Activated T-helper 1 cell treated with anti-CD3 and anti-CD28 coated beads, Interleukin-12 subunit alpha, Interleukin-12 subunit beta, Interleukin-2, Interleukin-4 antibody, amounts not matched to agents 30 ng/mL and 10 ng/mL and 1 ng/mL, durations not matched to agents 14 hours and 24 hours and 36 hours (primary cell): ENCODE measurements at regions of chr11 and their contacts with region 1.

Region 1: GRCh38 chr11:39374963-39375698 is 2084.3 kb downstream of the LRRC4C start:
- DNase-seq: no peak
- H3K4me3 Mint-ChIP-seq: no peak overlapping the region
- H3K27ac Mint-ChIP-seq: no peak overlapping the region
- H3K4me1 Mint-ChIP-seq: peaks cover 5% of the 10 kb centered on the region
- H3K27me3 Mint-ChIP-seq: no peaks in the 10 kb centered on the region

Region 2: GRCh38 chr11:37946155-37946766 is 1428.9 kb before region 1 on chr11:
- intact Hi-C with region 1: loop called (anchors 10 kb)
- DNase-seq: no peak
- H3K4me3 Mint-ChIP-seq: no peak overlapping the region
- H3K27ac Mint-ChIP-seq: no peak overlapping the region
- H3K4me1 Mint-ChIP-seq: no peaks in the 10 kb centered on the region
- H3K27me3 Mint-ChIP-seq: no peaks in the 10 kb centered on the region

Region 3: GRCh38 chr11:40293655-40294348 is 918.7 kb after region 1 on chr11:
- intact Hi-C with region 1: loop called (anchors 5 kb)
- DNase-seq: peak; percentile 7
- H3K4me3 Mint-ChIP-seq: peak overlapping the region; percentile 53
- H3K27ac Mint-ChIP-seq: no peak overlapping the region
- H3K4me1 Mint-ChIP-seq: no peaks in the 10 kb centered on the region
- H3K27me3 Mint-ChIP-seq: peaks cover 10% of the 10 kb centered on the region